GM12878 (cell line): ENCODE measurements at regions of chr5 and their contacts with region 1.

Region 1: DNA sequence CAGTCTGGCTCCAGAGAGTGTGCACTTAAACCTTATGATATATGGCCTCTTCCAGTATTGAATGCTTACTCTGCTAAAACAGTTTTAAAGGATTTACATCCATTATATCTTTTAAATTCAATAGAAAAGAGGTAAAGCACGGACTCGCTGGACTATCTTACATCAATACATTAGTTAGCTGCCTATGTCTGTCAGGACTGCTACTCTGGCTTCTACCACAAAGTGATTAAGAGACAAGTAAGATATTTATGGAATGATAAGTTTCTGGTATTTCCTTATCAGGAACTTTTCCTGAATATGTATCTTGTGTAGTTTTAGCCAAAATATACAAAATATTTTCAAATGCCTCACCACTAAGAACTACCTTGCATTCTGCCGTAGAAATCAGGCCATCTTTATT is 295.1 kb downstream of the ISL1 start:
- DNase-seq: no peak
- ATAC-seq: no peak
- H3K4me3 ChIP-seq: no peak overlapping the region
- H3K27ac ChIP-seq: no peak overlapping the region
- H3K4me1 ChIP-seq: no peaks in the 10 kb centered on the region
- H3K27me3 ChIP-seq: no peaks in the 10 kb centered on the region
- CTCF ChIP-seq: no peak
- EP300 ChIP-seq: no peak
- POLR2A ChIP-seq: no peak
- RAD21 ChIP-seq: no peak

Region 2: GRCh38 chr5:51731428-51732029 is 53.2 kb after region 1 on chr5:
- CTCF ChIA-PET with region 1: no interaction called
- POLR2A ChIA-PET with region 1: no interaction called
- RAD21 ChIA-PET with region 1: no interaction called
- SMC1A ChIA-PET with region 1: no interaction called
- in situ Hi-C with region 1: no loop called
- intact Hi-C with region 1: loop called (anchors 10 kb)
- DNase-seq: no peak
- ATAC-seq: no peak
- H3K4me3 ChIP-seq: no peak overlapping the region
- H3K27ac ChIP-seq: no peak overlapping the region
- H3K4me1 ChIP-seq: no peaks in the 10 kb centered on the region
- H3K27me3 ChIP-seq: no peaks in the 10 kb centered on the region
- CTCF ChIP-seq: no peak
- EP300 ChIP-seq: no peak
- POLR2A ChIP-seq: no peak
- RAD21 ChIP-seq: no peak